ENCODE measurements at regions of chr10 and their contacts with region 1.

Region 1: DNA sequence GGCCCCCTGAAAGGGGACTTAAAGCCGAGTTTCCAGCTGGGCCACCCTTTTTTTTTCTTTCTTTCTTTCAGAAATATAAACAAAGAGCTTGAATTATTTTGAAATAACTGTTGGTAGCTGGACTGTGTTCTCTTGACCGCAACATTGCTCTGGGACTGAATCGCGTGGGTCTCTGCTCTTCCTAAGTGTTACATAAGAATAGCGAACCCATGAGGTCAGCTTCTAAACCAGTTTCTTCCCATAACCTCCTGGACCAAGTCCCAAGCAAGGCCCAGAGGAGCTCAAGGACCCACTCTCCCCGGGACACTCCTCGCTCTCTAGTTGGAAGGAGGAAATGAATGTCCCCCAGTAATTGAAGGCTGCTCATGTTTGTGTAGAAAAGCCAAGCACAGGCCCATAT is 91.1 kb downstream of the CXCL12 start:
- DNase-seq: no peak

Region 2: GRCh38 chr10:43824934-43825333 is 468.9 kb before region 1 on chr10:
- intact Hi-C with region 1: loop called (anchors 10 kb)
- DNase-seq: peak; percentile 89

Region 3: GRCh38 chr10:43922335-43923280 is 371.2 kb before region 1 on chr10:
- intact Hi-C with region 1: no loop called
- DNase-seq: peak; percentile 63